ENCODE measurements at regions of chr1 and their contacts with region 1.

Region 1: GRCh38 chr1:47378147-47378546 is 37.9 kb upstream of the FOXE3 start:
- DNase-seq: no peak
- H3K4me3 ChIP-seq: no peak overlapping the region
- H3K27ac ChIP-seq: no peak overlapping the region
- H3K4me1 ChIP-seq: no peaks in the 10 kb centered on the region
- H3K27me3 ChIP-seq: no peaks in the 10 kb centered on the region
- CTCF ChIP-seq: no peak
- POLR2A ChIP-seq: no peak

Region 2: GRCh38 chr1:47298025-47298699 is 80.0 kb before region 1 on chr1:
- CTCF ChIA-PET with region 1: no interaction called
- POLR2A ChIA-PET with region 1: no interaction called
- dilution Hi-C with region 1: no loop called
- intact Hi-C with region 1: loop called (anchors 5 kb)
- DNase-seq: peak; percentile 21
- H3K4me3 ChIP-seq: no peak overlapping the region
- H3K27ac ChIP-seq: no peak overlapping the region
- H3K4me1 ChIP-seq: no peaks in the 10 kb centered on the region
- H3K27me3 ChIP-seq: no peaks in the 10 kb centered on the region
- CTCF ChIP-seq: no peak
- POLR2A ChIP-seq: no peak